B cell (primary cell): ENCODE measurements at regions of chr9 and their contacts with region 1.

Region 1: GRCh38 chr9:13088720-13089427 is 190.6 kb downstream of the MPDZ start:
- DNase-seq: peak; percentile 2
- ATAC-seq: no peak
- H3K4me3 ChIP-seq: no peak overlapping the region
- H3K4me3 Mint-ChIP-seq: no peak overlapping the region
- H3K27ac ChIP-seq: no peak overlapping the region
- H3K27ac Mint-ChIP-seq: no peak overlapping the region
- H3K4me1 ChIP-seq: no peaks in the 10 kb centered on the region
- H3K4me1 Mint-ChIP-seq: no peaks in the 10 kb centered on the region
- H3K27me3 ChIP-seq: no peaks in the 10 kb centered on the region
- H3K27me3 Mint-ChIP-seq: no peaks in the 10 kb centered on the region
- CTCF ChIP-seq: peak; percentile 47

Region 2: DNA sequence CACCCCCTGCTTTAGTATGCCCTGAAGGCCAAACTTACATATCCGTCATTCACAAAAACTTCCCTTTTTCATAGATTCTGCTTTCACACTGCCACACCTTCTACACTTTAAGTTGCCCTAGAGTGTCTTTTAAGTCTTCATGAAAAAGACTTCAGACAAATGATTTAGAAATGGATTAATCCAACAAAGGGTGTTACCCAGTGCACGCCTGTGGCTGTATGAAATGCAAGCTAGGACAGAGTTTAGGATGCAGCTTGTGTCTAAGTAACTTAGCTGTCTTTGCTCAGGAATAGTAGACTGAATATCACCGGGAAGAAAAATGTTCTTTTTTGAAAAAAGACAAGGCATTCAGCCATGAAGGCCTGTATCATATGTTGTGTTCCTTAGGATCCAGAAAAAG is 19.4 kb before region 1 on chr9:
- CTCF ChIA-PET with region 1: no interaction called
- POLR2A ChIA-PET with region 1: no interaction called
- intact Hi-C with region 1: loop called (anchors 1 kb)
- DNase-seq: no peak
- ATAC-seq: no peak
- H3K4me3 ChIP-seq: no peak overlapping the region
- H3K4me3 Mint-ChIP-seq: no peak overlapping the region
- H3K27ac ChIP-seq: no peak overlapping the region
- H3K27ac Mint-ChIP-seq: no peak overlapping the region
- H3K4me1 ChIP-seq: no peaks in the 10 kb centered on the region
- H3K4me1 Mint-ChIP-seq: no peaks in the 10 kb centered on the region
- H3K27me3 ChIP-seq: no peaks in the 10 kb centered on the region
- H3K27me3 Mint-ChIP-seq: no peaks in the 10 kb centered on the region
- CTCF ChIP-seq: no peak

Region 3: GRCh38 chr9:13244181-13244580 is 155.3 kb after region 1 on chr9:
- CTCF ChIA-PET with region 1: no interaction called
- POLR2A ChIA-PET with region 1: no interaction called
- intact Hi-C with region 1: no loop called
- DNase-seq: no peak
- ATAC-seq: no peak
- H3K4me3 ChIP-seq: no peak overlapping the region
- H3K4me3 Mint-ChIP-seq: no peak overlapping the region
- H3K27ac ChIP-seq: no peak overlapping the region
- H3K27ac Mint-ChIP-seq: no peak overlapping the region
- H3K4me1 ChIP-seq: no peaks in the 10 kb centered on the region
- H3K4me1 Mint-ChIP-seq: no peaks in the 10 kb centered on the region
- H3K27me3 ChIP-seq: no peaks in the 10 kb centered on the region
- H3K27me3 Mint-ChIP-seq: no peaks in the 10 kb centered on the region
- CTCF ChIP-seq: no peak